Left lung (tissue), 14 donors: ENCODE measurements at regions of chr3 and their contacts with region 1.

Region 1: GRCh38 chr3:152322756-152323155 is 54.0 kb downstream of the MBNL1 start:
- DNase-seq: no peak
- ATAC-seq: peak; percentile 45
- H3K4me3 ChIP-seq: no peak overlapping the region
- H3K27ac ChIP-seq: no peak overlapping the region
- H3K4me1 ChIP-seq: peaks cover 35 to 80% of the 10 kb centered on the region in 2 donors
- H3K27me3 ChIP-seq: no peaks in the 10 kb centered on the region
- CTCF ChIP-seq: no peak

Region 2: DNA sequence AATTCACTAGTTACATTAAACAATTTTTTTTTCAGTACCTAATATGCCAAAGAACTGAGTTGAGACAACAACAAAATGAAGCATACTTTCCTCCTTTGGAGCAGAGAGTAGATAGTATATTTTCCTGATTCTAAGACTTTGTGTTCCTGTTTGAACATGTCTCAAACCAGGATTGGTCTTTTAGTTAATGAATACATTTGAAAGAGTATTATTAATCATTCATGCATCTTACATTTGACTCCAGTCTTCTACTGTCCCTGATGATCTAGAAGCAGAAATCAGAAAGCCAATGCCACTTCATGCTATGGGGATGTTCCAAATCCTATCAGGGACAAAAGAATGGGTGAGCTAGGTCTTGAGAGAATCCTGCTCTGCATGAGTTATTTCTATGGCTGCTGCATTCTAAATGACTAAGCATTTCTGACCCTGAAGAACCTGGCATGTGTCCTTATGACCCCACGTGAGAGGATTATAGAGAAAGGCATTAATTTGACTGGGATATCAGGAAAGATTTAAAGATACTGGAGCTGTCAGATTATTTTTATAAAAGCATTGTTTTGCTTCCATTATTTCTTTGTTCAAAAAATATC is 87.0 kb before region 1 on chr3:
- intact Hi-C with region 1: no loop called
- DNase-seq: no peak
- ATAC-seq: no peak
- H3K4me3 ChIP-seq: no peak overlapping the region
- H3K27ac ChIP-seq: no peak overlapping the region
- H3K4me1 ChIP-seq: peaks cover 1 to 4% of the 10 kb centered on the region in 2 donors
- H3K27me3 ChIP-seq: no peaks in the 10 kb centered on the region
- CTCF ChIP-seq: no peak

Region 3: GRCh38 chr3:152269426-152270188 is 53.1 kb before region 1 on chr3:
- intact Hi-C with region 1: loop called in 1 of 2 experiments (anchors 10 kb)
- DNase-seq: peak; percentile 9 to 82 (median 58)
- ATAC-seq: peak; percentile 54
- H3K4me3 ChIP-seq: peak overlapping the region; percentile 68 to 69
- H3K27ac ChIP-seq: peak overlapping the region; percentile 99 to 100
- H3K4me1 ChIP-seq: peaks cover 17 to 65% of the 10 kb centered on the region in 2 donors
- H3K27me3 ChIP-seq: no peaks in the 10 kb centered on the region
- CTCF ChIP-seq: no peak

Region 4: DNA sequence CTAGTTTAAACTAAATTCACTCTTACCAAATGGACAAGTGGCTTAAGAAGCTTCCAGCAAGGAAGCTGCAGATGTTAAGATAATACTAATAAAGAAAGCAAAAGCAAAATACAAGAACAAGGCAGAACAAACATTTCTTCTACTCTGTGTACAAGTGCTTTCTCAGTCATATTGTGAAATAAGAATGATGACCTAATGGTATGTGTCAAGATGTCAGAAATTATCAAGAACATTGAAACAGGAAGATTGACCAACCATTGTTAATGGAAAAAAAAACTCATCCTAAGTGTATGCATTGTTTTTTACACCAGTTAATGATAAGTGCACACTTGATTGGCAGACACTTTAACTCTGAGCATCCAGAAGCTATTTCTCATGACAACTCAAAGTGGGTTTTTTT is 446.8 kb after region 1 on chr3:
- intact Hi-C with region 1: no loop called
- DNase-seq: no peak
- ATAC-seq: no peak
- H3K4me3 ChIP-seq: no peak overlapping the region
- H3K27ac ChIP-seq: no peak overlapping the region
- H3K4me1 ChIP-seq: no peaks in the 10 kb centered on the region
- H3K27me3 ChIP-seq: no peaks in the 10 kb centered on the region
- CTCF ChIP-seq: no peak